ENCODE measurements at regions of chr18 and their contacts with region 1.

Region 1: GRCh38 chr18:77124452-77124922 is 8.1 kb downstream of the MBP start:
- DNase-seq: peak; percentile 81
- H3K4me3 Mint-ChIP-seq: peak overlapping the region; percentile 70
- H3K27ac Mint-ChIP-seq: peak overlapping the region; percentile 93
- H3K4me1 Mint-ChIP-seq: peaks cover 88% of the 10 kb centered on the region
- H3K27me3 Mint-ChIP-seq: no peaks in the 10 kb centered on the region

Region 2: GRCh38 chr18:77067291-77068061 is 57.0 kb before region 1 on chr18:
- CTCF ChIA-PET with region 1: interaction called, 3 read pairs
- intact Hi-C with region 1: loop called (anchors 1 kb)
- DNase-seq: peak; percentile 77
- H3K4me3 Mint-ChIP-seq: peak overlapping the region; percentile 17
- H3K27ac Mint-ChIP-seq: peak overlapping the region; percentile 92
- H3K4me1 Mint-ChIP-seq: peaks cover 99% of the 10 kb centered on the region
- H3K27me3 Mint-ChIP-seq: no peaks in the 10 kb centered on the region

Region 3: DNA sequence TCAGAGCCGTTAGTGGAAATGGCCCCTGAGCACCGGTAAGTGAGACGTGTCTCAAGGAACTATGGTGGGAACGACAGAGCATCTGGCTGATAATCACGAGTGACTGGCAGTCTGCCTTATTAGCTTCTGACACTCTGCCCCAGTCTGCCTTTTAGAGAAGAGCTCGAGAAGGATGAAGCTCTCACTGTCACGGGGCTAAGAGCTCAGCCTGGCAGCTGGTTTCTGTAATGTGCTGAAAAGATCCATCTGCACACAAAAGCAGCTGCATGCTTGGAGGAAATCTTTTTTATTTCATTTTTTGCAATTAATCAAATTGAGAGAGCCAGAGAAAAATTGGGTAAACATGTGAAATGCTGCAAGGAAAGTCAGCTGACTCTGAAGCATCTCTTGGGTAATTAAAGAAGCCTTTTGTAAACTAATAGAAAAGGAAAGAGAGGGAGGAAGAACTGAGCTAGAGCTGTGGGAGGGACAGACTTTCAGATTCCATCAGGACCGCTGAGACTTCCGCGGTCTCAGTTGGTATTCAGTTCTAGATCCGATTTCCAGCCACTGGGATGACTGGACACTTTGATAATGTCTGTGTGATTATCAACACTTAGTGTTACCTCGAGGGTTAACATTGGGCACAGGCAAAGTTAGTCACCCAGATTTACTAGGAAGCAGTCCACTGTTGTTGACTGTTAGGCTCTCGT is 16.3 kb before region 1 on chr18:
- CTCF ChIA-PET with region 1: interaction called, 13 read pairs
- intact Hi-C with region 1: no loop called
- DNase-seq: peak; percentile 62
- H3K4me3 Mint-ChIP-seq: peak overlapping the region; percentile 3
- H3K27ac Mint-ChIP-seq: peak overlapping the region; percentile 19
- H3K4me1 Mint-ChIP-seq: peaks cover 92% of the 10 kb centered on the region
- H3K27me3 Mint-ChIP-seq: no peaks in the 10 kb centered on the region

Measured in activated naive CD4-positive, alpha-beta T cell treated with anti-CD3 and anti-CD28 coated beads for 36 hours (primary cell).